Stomach (tissue), 19 donors: ENCODE measurements at regions of chr14 and their contacts with region 1.

Region 1: DNA sequence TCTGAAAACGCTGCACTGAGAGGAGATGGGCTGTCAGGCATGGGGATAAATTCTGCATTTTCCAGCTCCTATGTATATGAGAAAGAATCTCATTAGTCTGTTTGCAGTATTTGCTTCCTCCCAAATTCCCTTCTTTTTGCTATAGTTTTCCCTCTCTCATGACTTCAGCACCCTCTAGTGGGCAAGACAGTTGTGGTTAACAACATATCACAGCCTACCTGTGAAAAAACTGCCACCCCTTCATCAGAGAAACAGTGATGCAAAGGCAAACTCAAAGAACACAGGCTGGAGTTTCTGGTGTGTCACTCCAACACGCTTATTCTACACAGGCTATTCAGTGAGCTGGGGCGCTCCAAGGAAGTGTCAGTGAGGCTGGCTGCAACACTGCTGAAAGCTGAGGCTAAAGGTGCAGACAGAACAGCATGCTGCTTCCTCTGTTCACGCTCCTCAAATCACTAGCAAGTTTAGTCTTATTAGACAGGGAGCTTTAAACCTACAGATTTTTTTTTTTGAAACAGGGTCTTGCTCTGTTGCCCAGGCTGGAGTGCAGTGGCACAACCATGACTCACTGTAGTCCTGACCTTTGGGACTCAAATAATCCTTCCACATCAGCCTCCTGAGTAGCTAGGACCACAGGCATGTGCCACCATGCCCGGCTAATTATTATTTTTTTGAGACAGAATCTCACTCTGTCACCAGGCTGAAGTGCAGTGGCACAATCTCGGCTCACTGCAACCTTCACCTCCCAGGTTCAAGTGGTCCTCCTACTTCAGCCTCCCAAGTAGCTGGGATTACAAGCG is 19.3 kb downstream of the ZC2HC1C start:
- DNase-seq: peak; percentile 37 to 86
- H3K4me3 ChIP-seq: no peak overlapping the region
- H3K27ac ChIP-seq: no peak overlapping the region
- H3K4me1 ChIP-seq: no peaks in the 10 kb centered on the region
- H3K27me3 ChIP-seq: no peaks in the 10 kb centered on the region
- CTCF ChIP-seq: peak in 5 of 7 experiments; percentile 32 to 79 (median 68)
- EP300 ChIP-seq: no peak
- POLR2A ChIP-seq: no peak

Region 2: GRCh38 chr14:74913986-74914573 is 174.7 kb before region 1 on chr14:
- intact Hi-C with region 1: loop called (anchors 10 kb)
- DNase-seq: peak; percentile 65 to 90
- H3K4me3 ChIP-seq: no peak overlapping the region
- H3K27ac ChIP-seq: peak overlapping the region in 3 of 5 donors; percentile 37 to 54 (median 38)
- H3K4me1 ChIP-seq: peaks cover 0 to 27% (median 11%) of the 10 kb centered on the region in 4 donors
- H3K27me3 ChIP-seq: no peaks in the 10 kb centered on the region
- CTCF ChIP-seq: peak in 4 of 7 experiments; percentile 52 to 71 (median 54)
- EP300 ChIP-seq: no peak
- POLR2A ChIP-seq: no peak

Region 3: GRCh38 chr14:75278422-75279161 is 189.8 kb after region 1 on chr14 and contains the start of gene FOS:
- intact Hi-C with region 1: no loop called
- DNase-seq: peak; percentile 93 to 98
- H3K4me3 ChIP-seq: peak within 1 kb of the TSS; percentile 65 to 93 (median 72)
- H3K27ac ChIP-seq: peak within 1 kb of the TSS; percentile 85 to 97 (median 97)
- H3K4me1 ChIP-seq: peaks cover 29 to 68% (median 57%) of the 10 kb centered on the region in 4 donors
- H3K27me3 ChIP-seq: no peaks in the 10 kb centered on the region
- CTCF ChIP-seq: no peak
- EP300 ChIP-seq: peak; percentile 65
- POLR2A ChIP-seq: peak in 2 of 4 donors; percentile 92 to 98
- total RNA-seq, gene FOS: 134 to 1,274 (median 649) TPM